Transverse colon (tissue), 4 donors: ENCODE measurements at regions of chr4 and their contacts with region 1.

Region 1: DNA sequence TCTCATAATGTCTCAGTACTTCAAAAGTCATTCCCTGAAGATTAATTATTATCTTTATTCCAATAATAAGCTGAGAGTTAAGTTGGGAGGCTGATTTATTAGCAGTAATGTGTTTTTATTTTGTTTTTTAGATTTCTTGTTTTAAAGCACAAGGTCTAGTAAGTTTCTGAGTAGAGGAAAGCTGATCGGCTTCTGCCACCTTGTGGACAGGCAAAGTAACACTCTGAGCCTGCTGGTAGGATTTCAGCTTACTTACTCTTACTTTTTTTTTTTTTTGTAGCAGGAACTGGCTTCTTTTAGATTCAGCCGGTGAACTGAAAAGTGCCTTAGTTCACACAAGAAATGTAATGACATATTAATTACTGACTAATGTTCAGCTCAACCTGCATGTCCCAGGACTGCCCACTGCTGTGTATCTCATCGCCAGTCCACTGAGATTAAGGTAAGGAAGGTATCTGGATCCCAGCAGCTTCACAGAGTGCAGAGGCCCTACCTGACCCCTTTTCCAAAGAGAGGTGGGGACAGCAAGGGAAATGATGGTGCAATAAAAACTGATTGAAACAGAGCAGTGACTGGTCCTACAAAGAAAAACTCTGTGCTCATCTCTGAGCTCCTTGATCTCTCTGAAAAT is 126.5 kb downstream of the ADGRA3 start:
- DNase-seq: peak; percentile 46
- H3K4me3 ChIP-seq: no peak overlapping the region
- H3K27ac ChIP-seq: no peak overlapping the region
- H3K4me1 ChIP-seq: no peaks in the 10 kb centered on the region
- H3K27me3 ChIP-seq: no peaks in the 10 kb centered on the region
- CTCF ChIP-seq: peak; percentile 67 to 81 (median 73)
- EP300 ChIP-seq: no peak
- POLR2A ChIP-seq: no peak

Region 2: DNA sequence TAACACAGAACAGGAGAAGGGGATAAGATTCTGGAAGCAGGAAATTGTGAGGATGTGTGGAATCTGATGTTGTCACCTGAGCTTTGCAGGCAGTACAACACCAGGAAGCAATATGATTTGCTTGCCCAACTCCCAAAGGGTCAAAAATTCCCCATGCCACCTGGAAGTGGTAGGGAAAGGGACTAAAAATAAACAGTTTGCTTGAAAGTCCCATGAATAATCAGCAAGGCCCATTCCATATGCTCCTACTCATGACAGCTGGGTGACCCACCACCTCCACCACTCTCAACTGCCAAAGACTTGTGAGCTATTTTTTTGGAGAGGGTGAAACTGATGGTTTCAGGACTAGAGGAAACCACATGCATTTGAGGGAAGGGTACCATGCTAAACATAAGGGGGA is 609.2 kb before region 1 on chr4:
- in situ Hi-C with region 1: loop called (anchors 10 to 25 kb)
- intact Hi-C with region 1: no loop called
- DNase-seq: no peak
- H3K4me3 ChIP-seq: no peak overlapping the region
- H3K27ac ChIP-seq: no peak overlapping the region
- H3K4me1 ChIP-seq: no peaks in the 10 kb centered on the region
- H3K27me3 ChIP-seq: no peaks in the 10 kb centered on the region
- CTCF ChIP-seq: no peak
- EP300 ChIP-seq: no peak
- POLR2A ChIP-seq: no peak

Region 3: GRCh38 chr4:21790438-21791029 is 598.8 kb before region 1 on chr4:
- in situ Hi-C with region 1: loop called (anchors 10 to 25 kb)
- intact Hi-C with region 1: loop called (anchors 2 kb)
- DNase-seq: no peak
- H3K4me3 ChIP-seq: no peak overlapping the region
- H3K27ac ChIP-seq: no peak overlapping the region
- H3K4me1 ChIP-seq: no peaks in the 10 kb centered on the region
- H3K27me3 ChIP-seq: no peaks in the 10 kb centered on the region
- CTCF ChIP-seq: peak; percentile 36 to 65 (median 49)
- EP300 ChIP-seq: no peak
- POLR2A ChIP-seq: no peak

Region 4: DNA sequence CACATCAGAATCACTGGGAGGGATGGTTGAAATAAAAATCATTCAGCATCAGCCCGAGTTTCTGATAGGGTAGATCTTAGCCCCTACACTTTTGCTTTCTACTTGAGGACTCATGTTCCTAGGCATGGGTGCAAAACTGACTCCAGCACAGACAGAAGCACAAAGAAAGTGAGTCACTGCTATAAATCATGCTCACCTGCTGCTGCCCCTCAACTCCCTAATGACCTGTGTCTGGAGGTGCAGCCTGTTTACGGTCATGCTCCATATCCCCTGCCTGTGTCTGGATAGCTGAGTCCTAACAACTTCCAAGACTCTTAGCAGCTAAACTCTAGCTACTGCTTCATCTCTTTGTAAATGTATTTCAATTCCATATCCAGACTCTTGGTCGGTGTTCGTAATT is 68.7 kb after region 1 on chr4:
- in situ Hi-C with region 1: loop called in 1 of 4 experiments (anchors 10 kb)
- intact Hi-C with region 1: no loop called
- DNase-seq: no peak
- H3K4me3 ChIP-seq: no peak overlapping the region
- H3K27ac ChIP-seq: no peak overlapping the region
- H3K4me1 ChIP-seq: peaks cover 0 to 4% (median 0%) of the 10 kb centered on the region in 4 donors
- H3K27me3 ChIP-seq: no peaks in the 10 kb centered on the region
- CTCF ChIP-seq: no peak
- EP300 ChIP-seq: no peak
- POLR2A ChIP-seq: no peak